ENCODE measurements at regions of chr20 and their contacts with region 1.

Region 1: GRCh38 chr20:35741892-35742740 is at the start of gene RBM39:
- DNase-seq: peak; percentile 100
- ATAC-seq: peak; percentile 95
- total RNA-seq, gene RBM39: 134 TPM

Region 2: DNA sequence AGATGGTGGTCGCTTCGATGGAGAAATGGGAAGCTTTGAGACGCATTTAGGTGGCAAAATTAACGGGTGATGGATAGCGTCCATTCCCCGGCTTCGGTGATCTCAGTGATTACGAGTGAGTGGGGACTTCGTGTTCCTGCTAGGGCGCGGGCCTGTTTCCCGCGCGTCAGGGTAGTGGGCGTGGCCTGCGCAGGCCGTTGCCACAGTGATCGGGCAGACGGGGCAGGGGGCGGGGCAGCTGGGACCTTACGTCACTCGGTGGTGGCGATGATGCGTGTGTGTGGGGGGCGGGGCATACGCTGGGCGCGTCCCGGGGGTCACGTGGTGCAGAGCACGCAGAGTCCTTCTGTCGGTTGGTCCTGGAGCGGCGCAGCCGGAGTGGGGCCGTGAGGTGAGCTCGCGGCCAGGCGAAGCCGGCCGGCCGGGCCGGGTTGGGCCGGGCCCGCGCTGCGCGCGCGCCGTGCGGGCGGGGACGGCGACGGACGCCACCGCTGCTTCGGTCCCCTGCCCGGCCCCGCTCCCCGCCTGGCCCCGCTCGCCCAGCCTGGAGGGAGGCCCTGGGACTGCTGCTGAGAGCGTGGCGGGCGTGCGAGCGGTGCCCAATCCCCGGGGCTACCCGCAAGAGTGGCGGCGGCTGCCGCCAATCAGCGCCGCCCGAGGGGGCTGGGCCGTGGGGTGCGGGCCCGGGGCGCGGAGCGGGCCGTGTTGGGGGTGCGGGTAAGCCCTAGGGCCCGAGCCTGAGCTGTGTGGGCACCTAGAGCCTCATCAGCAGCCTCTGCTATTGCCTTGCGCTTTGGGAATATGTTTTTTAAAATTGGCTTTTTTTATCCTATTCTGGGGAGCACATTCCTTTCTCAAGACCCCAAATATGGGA is 29.8 kb after region 1 on chr20 and contains the start of gene PHF20:
- intact Hi-C with region 1: loop called (anchors 2 kb)
- DNase-seq: peak; percentile 100
- ATAC-seq: peak; percentile 87
- total RNA-seq, gene PHF20: 37.2 TPM

Region 3: DNA sequence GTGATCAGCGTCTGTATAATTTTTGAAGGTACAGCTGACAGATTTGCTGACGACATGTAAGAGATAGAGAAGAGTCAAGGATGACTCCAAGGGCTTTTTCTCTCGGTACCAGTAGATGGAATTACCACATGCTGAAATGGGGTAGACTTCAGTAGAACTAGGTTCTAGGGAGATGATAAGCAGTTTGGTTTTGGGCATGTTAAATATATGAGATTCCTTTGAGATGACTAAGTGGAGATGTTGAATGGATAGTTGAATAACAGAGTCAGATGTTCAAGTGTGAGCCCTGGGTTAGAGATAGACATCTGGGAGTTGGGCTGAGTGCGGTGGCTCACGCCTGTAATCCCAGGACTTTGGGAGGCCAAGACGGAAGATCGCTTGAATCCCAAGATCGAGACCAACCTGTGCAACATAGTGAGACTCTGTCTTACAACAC is 79.7 kb after region 1 on chr20:
- intact Hi-C with region 1: no loop called
- DNase-seq: no peak
- ATAC-seq: no peak

Region 4: GRCh38 chr20:35883778-35884540 is 141.8 kb after region 1 on chr20:
- intact Hi-C with region 1: loop called (anchors 10 kb)
- DNase-seq: peak; percentile 78
- ATAC-seq: peak; percentile 84

Measured in Right ventricle myocardium superior (tissue), 1 donor.